Left cardiac atrium (tissue), 4 donors: ENCODE measurements at regions of chr4 and their contacts with region 1.

Region 1: GRCh38 chr4:16532240-16532970 is 306.1 kb upstream of the TAPT1 start:
- DNase-seq: peak; percentile 24
- ATAC-seq: peak; percentile 79 to 81

Region 2: DNA sequence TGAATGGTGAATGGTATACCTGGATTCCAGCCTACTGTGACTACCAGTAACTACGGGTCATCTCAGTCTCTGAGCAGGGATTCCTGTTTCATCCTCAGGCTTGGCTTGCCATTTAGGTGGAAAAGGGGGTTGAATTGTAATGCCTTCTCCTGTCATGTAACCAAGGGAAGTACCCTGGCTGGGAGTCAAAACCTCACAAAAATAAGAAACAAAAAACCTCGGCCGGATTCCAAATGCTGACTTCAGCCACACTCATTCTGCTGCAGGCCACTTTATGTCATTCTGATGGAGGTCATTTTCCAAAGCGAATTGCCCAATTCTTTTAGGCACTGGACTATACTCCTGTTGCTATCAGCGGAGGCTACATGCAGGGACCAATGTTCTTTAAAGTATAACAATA is 41.3 kb after region 1 on chr4:
- intact Hi-C with region 1: loop called in 1 of 2 experiments (anchors 5 kb)
- DNase-seq: peak; percentile 57
- ATAC-seq: peak; percentile 75 to 78